ENCODE measurements at regions of chr5 and their contacts with region 1.

Region 1: GRCh38 chr5:43066799-43067741 is 27.0 kb upstream of the ANXA2R start:
- DNase-seq: peak; percentile 80 to 96 (median 89)
- ATAC-seq: peak; percentile 69
- H3K4me3 ChIP-seq: peak overlapping the region; percentile 82
- H3K4me3 Mint-ChIP-seq: peak overlapping the region; percentile 93 to 100 (median 98)
- H3K27ac ChIP-seq: peak overlapping the region; percentile 90
- H3K27ac Mint-ChIP-seq: peak overlapping the region; percentile 99 to 100 (median 99)
- H3K4me1 ChIP-seq: peaks cover 25 to 33% of the 10 kb centered on the region in 2 donors
- H3K4me1 Mint-ChIP-seq: peaks cover 26 to 67% (median 44%) of the 10 kb centered on the region in 7 donors
- H3K27me3 ChIP-seq: no peaks in the 10 kb centered on the region
- H3K27me3 Mint-ChIP-seq: no peaks in the 10 kb centered on the region

Region 2: DNA sequence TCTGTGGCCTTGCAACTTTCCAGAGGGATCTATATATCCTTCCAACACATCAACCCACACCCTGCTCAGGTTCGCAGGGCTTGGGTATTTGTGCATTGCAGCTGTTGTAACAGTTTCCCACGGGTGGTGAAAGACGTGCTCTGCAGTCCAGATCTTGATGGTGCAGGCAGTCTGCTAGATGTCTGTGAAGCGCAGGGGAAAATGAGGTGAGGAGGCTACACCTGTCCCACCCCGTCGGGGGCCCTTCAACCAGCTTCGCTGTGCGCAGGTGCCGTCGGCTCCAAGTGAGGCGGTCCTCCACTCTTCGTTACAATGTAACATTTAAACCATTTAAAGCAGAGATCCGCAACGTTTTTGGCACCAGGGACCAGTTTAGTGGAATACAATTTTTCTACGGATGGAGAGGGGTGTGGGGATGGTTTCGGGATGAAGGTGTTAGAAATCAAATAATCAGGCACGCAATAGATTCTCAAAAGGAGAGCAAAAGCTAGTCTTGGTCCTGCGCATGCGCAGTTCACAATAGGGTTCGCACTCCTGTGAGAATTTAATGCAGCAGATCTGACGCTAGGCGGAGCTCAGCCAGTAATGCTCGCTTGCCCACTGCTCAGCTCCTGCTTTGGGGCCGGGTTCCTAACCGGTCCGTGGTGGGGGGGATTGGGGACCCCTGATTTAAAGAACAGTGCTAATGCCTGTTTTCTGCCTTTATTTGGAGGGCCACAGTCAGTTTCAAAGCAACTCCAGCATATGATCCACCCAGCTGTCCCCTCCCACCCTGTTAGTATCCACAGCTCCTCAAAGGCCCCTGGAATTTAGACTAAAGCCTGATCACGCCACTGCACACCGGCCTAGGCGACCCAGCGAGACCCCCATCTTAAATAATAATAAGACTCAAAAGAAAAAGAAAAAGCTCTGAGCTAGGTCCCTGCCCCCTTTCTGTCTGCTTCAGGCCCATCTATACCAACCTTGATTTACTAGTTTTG is 158.3 kb before region 1 on chr5:
- CTCF ChIA-PET with region 1: interaction called, 16 read pairs
- POLR2A ChIA-PET with region 1: interaction called, 81 read pairs
- intact Hi-C with region 1: loop called in 1 of 2 experiments (anchors 1 kb)
- DNase-seq: peak; percentile 76 to 93 (median 88)
- ATAC-seq: peak; percentile 92
- H3K4me3 ChIP-seq: peak overlapping the region; percentile 72
- H3K4me3 Mint-ChIP-seq: peak overlapping the region; percentile 89 to 98 (median 94)
- H3K27ac ChIP-seq: peak overlapping the region; percentile 76
- H3K27ac Mint-ChIP-seq: peak overlapping the region; percentile 64 to 97 (median 95)
- H3K4me1 ChIP-seq: peaks cover 0 to 4% of the 10 kb centered on the region in 2 donors
- H3K4me1 Mint-ChIP-seq: peaks cover 5 to 22% (median 19%) of the 10 kb centered on the region in 7 donors
- H3K27me3 ChIP-seq: no peaks in the 10 kb centered on the region
- H3K27me3 Mint-ChIP-seq: peaks cover 0 to 43% (median 0%) of the 10 kb centered on the region in 5 donors

Region 3: DNA sequence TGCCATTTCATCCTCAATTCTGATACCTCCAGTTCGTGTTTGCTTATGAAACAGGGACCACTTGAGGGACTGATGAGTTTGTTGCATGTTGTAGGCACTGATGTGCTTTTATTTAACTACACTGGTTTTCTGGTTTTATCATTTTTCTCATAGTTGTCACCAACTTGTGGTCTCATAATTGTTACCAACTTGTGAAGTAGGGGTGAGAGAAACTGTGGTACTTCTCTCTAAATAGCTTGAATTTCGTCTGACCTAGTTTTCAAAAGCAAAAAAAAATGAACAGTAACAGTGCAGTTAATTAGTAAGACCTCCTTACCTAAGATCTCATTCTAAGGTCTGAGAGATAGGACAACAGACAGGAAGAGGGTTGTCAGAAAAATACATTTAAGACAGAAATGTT is 104.9 kb before region 1 on chr5:
- CTCF ChIA-PET with region 1: no interaction called
- POLR2A ChIA-PET with region 1: no interaction called
- intact Hi-C with region 1: no loop called
- DNase-seq: no peak
- ATAC-seq: peak; percentile 26
- H3K4me3 ChIP-seq: no peak overlapping the region
- H3K4me3 Mint-ChIP-seq: peak overlapping the region in 1 of 10 donors; percentile 9
- H3K27ac ChIP-seq: no peak overlapping the region
- H3K27ac Mint-ChIP-seq: peak overlapping the region in 3 of 9 donors; percentile 10 to 19 (median 11)
- H3K4me1 ChIP-seq: peaks cover 0 to 16% of the 10 kb centered on the region in 2 donors
- H3K4me1 Mint-ChIP-seq: peaks cover 0 to 31% (median 12%) of the 10 kb centered on the region in 7 donors
- H3K27me3 ChIP-seq: no peaks in the 10 kb centered on the region
- H3K27me3 Mint-ChIP-seq: peaks cover 0 to 4% (median 0%) of the 10 kb centered on the region in 5 donors

Region 4: DNA sequence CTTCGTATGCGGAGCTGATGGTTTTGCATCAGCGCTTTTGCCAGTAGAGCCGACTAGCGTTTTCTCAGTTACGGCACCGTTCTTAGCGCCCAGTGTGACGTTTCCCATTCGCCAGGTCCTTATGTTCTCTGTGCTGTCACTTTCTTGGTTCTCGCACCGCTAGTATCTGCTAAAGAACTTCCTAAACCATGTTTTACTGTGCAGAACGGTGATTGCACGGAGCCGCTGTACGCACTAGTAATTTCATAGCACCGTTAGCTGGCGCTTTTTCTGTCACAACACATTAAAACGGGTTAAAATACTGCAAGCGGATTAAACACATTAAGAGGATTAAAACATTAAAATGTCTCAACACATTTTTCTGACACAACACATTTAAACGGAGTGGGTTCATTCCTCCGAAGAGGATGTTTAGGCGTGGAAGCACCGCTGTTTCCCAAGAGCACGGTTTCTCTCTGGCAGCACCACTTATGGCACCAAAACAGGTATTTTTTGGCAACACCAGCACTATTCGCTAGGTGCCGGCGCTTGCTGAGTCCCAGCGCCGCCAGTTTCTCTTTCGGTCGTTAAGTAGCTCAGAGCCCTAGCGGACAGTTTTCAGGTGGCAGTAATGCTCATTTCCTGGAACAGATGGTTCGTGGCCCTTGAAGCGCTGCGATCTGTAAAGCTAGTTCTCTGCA is 47.3 kb before region 1 on chr5:
- CTCF ChIA-PET with region 1: interaction called, 33 read pairs
- POLR2A ChIA-PET with region 1: interaction called, 317 read pairs
- intact Hi-C with region 1: loop called (anchors 1 kb)
- DNase-seq: peak; percentile 63 to 94 (median 88)
- ATAC-seq: peak; percentile 77
- H3K4me3 ChIP-seq: peak overlapping the region; percentile 76
- H3K4me3 Mint-ChIP-seq: peak overlapping the region; percentile 92 to 99 (median 98)
- H3K27ac ChIP-seq: peak overlapping the region; percentile 96
- H3K27ac Mint-ChIP-seq: peak overlapping the region; percentile 96 to 100 (median 99)
- H3K4me1 ChIP-seq: peaks cover 34 to 35% of the 10 kb centered on the region in 2 donors
- H3K4me1 Mint-ChIP-seq: peaks cover 20 to 52% (median 46%) of the 10 kb centered on the region in 7 donors
- H3K27me3 ChIP-seq: no peaks in the 10 kb centered on the region
- H3K27me3 Mint-ChIP-seq: no peaks in the 10 kb centered on the region

Region 5: DNA sequence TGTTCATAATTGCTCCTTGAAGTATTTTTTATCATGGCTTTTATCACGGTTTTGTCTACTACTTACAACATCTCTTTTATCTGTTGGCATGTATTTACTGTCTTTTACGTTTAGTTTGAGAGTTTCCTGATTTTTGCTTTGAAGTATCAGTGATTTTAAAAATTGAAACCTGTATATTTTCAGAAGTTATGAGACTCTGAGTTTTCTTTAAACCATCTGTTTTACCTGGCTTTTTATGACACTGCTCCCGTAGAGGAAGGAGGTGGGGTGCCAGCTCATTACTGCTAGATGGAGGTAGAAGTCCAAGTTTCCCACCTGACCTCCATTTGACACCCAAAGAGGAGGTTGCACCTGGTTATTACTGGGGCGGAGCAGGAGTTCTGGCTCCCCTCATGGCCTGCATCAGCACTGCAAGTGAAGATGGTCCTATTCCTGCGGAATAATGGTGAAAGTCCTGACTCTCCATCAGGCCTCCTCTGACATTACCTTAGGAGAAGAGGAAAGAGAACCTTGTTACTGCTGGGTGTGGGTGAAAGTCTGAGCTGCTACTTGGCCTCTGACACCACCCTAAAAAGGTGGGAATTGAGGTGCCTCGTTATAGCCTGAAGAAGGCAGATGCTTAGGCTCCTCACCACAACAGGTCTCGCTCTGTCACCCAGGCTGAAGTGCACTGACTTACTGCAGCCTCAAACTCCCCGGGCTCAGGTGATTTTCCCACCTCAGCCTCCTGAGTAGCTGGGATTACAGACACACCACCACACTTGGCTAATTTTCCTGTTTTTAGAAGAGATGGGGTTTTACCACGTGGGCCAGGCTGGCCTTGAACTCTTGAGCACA is 43.8 kb after region 1 on chr5:
- CTCF ChIA-PET with region 1: interaction called, 6 read pairs
- POLR2A ChIA-PET with region 1: interaction called, 63 read pairs
- intact Hi-C with region 1: no loop called
- DNase-seq: peak in 7 of 9 donors; percentile 44 to 59 (median 51)
- ATAC-seq: peak; percentile 87
- H3K4me3 ChIP-seq: no peak overlapping the region
- H3K4me3 Mint-ChIP-seq: peak overlapping the region; percentile 37 to 86 (median 60)
- H3K27ac ChIP-seq: peak overlapping the region; percentile 54
- H3K27ac Mint-ChIP-seq: peak overlapping the region; percentile 66 to 97 (median 89)
- H3K4me1 ChIP-seq: peaks cover 0 to 28% of the 10 kb centered on the region in 2 donors
- H3K4me1 Mint-ChIP-seq: peaks cover 13 to 35% (median 28%) of the 10 kb centered on the region in 7 donors
- H3K27me3 ChIP-seq: no peaks in the 10 kb centered on the region
- H3K27me3 Mint-ChIP-seq: no peaks in the 10 kb centered on the region

Region 6: GRCh38 chr5:43367909-43368648 is 301.0 kb after region 1 on chr5:
- CTCF ChIA-PET with region 1: no interaction called
- POLR2A ChIA-PET with region 1: no interaction called
- intact Hi-C with region 1: no loop called
- DNase-seq: no peak
- ATAC-seq: no peak
- H3K4me3 ChIP-seq: no peak overlapping the region
- H3K4me3 Mint-ChIP-seq: no peak overlapping the region
- H3K27ac ChIP-seq: no peak overlapping the region
- H3K27ac Mint-ChIP-seq: no peak overlapping the region
- H3K4me1 ChIP-seq: no peaks in the 10 kb centered on the region
- H3K4me1 Mint-ChIP-seq: no peaks in the 10 kb centered on the region
- H3K27me3 ChIP-seq: no peaks in the 10 kb centered on the region
- H3K27me3 Mint-ChIP-seq: peaks cover 0 to 5% (median 0%) of the 10 kb centered on the region in 5 donors

Region 7: GRCh38 chr5:43396762-43397304 is 329.8 kb after region 1 on chr5:
- CTCF ChIA-PET with region 1: no interaction called
- POLR2A ChIA-PET with region 1: interaction called, 4 read pairs
- intact Hi-C with region 1: loop called in 1 of 2 experiments (anchors 2 kb)
- DNase-seq: peak; percentile 42 to 74 (median 66)
- ATAC-seq: peak; percentile 96
- H3K4me3 ChIP-seq: peak overlapping the region; percentile 80
- H3K4me3 Mint-ChIP-seq: peak overlapping the region; percentile 88 to 100 (median 98)
- H3K27ac ChIP-seq: peak overlapping the region; percentile 76
- H3K27ac Mint-ChIP-seq: peak overlapping the region; percentile 93 to 99 (median 97)
- H3K4me1 ChIP-seq: peaks cover 3 to 7% of the 10 kb centered on the region in 2 donors
- H3K4me1 Mint-ChIP-seq: peaks cover 15 to 62% (median 41%) of the 10 kb centered on the region in 7 donors
- H3K27me3 ChIP-seq: no peaks in the 10 kb centered on the region
- H3K27me3 Mint-ChIP-seq: no peaks in the 10 kb centered on the region

Region 8: DNA sequence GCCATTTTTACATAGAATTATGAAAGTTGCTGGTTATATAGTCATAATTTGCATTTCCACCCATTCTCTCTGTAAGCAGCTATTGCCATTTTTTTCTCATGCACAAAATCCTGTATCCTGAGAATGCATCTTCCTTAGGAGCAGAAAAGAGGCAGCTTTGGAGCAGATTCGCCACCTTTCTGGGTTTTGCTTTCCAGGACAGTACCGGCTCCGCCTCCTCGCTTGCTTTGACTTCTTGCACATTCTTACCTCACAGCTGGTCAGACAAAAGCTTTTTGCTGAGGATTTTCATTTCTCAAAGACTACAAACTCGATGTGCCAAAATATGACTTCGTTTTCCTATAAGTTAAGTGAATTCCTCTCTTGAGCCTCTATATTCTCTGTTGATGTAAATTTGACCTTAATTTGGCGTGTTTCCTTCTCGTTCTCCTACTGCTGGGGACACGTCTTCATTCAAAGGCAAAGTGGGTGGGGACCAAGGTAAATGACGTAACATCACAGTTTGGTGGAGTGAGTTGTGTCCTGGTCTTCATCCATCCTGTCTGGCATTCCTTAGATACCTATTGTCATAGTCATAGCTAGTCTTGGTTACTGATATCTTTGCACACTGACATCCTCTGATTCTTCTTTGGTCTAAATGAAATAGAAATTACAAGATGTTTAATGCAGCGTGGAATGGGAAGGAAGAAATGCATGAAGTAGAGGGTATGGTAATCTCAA is 644.3 kb after region 1 on chr5:
- CTCF ChIA-PET with region 1: no interaction called
- POLR2A ChIA-PET with region 1: no interaction called
- intact Hi-C with region 1: no loop called
- DNase-seq: no peak
- ATAC-seq: no peak
- H3K4me3 ChIP-seq: no peak overlapping the region
- H3K4me3 Mint-ChIP-seq: no peak overlapping the region
- H3K27ac ChIP-seq: no peak overlapping the region
- H3K27ac Mint-ChIP-seq: no peak overlapping the region
- H3K4me1 ChIP-seq: no peaks in the 10 kb centered on the region
- H3K4me1 Mint-ChIP-seq: peaks cover 0 to 1% (median 0%) of the 10 kb centered on the region in 7 donors
- H3K27me3 ChIP-seq: no peaks in the 10 kb centered on the region
- H3K27me3 Mint-ChIP-seq: no peaks in the 10 kb centered on the region

Measured in naive thymus-derived CD4-positive, alpha-beta T cell (primary cell).